Psoas muscle (tissue), 8 donors: ENCODE measurements at regions of chr2 and their contacts with region 1.

Region 1: DNA sequence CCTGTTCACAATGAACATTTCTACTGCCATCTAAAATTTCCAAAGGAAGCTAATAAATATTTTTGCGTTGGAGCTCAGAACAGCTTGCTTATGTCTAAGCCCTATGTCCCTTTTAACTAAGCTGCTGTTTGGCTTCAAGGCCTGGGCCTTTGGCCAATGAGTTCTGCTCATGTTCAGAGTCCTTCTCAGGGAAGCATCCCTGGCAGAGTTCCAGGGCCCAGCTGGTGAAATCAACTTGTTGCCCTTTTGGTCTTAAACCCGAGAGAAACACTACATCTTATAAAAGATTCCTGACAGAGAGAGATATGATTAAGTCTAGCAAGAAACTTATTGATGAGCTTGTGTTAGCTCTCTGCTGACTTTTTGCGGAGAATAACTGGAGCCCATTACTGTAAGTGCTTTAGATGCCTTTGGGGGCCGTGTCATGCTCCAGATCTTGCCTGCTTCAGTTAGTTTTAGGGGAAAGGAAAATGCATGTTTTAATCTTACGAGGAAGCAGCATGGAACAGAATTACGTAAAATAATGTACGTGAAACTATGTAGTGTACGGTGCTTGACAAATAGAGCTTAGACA is 102.5 kb upstream of the NOSTRIN start:
- DNase-seq: peak; percentile 65 to 82
- ATAC-seq: peak in 1 of 4 donors; percentile 54
- H3K4me3 ChIP-seq: no peak overlapping the region
- H3K27ac ChIP-seq: no peak overlapping the region
- H3K4me1 ChIP-seq: no peaks in the 10 kb centered on the region
- H3K27me3 ChIP-seq: no peaks in the 10 kb centered on the region
- CTCF ChIP-seq: no peak

Region 2: GRCh38 chr2:168920504-168921157 is 220.7 kb after region 1 on chr2:
- intact Hi-C with region 1: loop called in 1 of 2 experiments (anchors 5 kb)
- DNase-seq: no peak
- ATAC-seq: peak in 2 of 4 donors; percentile 49 to 64
- H3K4me3 ChIP-seq: no peak overlapping the region
- H3K27ac ChIP-seq: no peak overlapping the region
- H3K4me1 ChIP-seq: no peaks in the 10 kb centered on the region
- H3K27me3 ChIP-seq: no peaks in the 10 kb centered on the region
- CTCF ChIP-seq: peak; percentile 72